HEK293T (cell line): ENCODE measurements at regions of chr4 and their contacts with region 1.

Region 1: GRCh38 chr4:147518846-147519767 is 38.2 kb downstream of the EDNRA start:
- DNase-seq: peak; percentile 65

Region 2: GRCh38 chr4:147480891-147481576 is 38.1 kb before region 1 on chr4 and contains the start of gene EDNRA:
- CTCF ChIA-PET with region 1: interaction called, 11 read pairs
- POLR2A ChIA-PET with region 1: no interaction called
- DNase-seq: peak; percentile 53

Region 3: DNA sequence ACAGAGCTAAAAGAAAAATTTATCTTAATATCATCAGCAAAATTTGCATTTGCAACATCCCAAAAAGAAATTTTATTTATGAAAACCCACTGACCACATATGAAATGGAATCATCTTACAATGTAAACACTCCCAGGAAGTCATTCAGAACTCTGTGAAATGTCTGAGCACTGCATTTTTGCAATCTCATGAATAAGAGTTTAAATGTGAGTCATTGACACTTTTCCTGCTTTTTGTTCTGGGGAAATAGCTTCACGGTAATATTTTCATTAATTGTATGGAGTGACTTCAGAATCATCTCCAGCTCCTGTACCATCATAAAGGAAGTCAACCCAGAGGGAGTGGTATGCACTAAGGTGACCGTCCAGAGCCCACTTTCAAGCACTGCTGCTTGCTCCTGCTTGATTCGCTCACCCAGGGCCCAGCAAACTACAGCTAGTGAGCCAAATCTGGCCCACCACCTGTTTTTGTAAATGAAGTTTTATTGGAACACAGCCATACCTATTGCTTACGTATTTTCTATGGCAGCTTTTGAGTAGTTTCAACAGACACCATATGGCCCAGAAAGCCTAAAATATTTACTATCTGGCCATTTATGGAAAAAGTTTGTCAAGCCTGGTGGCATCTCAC is 21.0 kb before region 1 on chr4:
- CTCF ChIA-PET with region 1: interaction called, 22 read pairs
- POLR2A ChIA-PET with region 1: no interaction called
- DNase-seq: no peak